Kidney (tissue), 22 donors: ENCODE measurements at regions of chr20 and their contacts with region 1.

Region 1: DNA sequence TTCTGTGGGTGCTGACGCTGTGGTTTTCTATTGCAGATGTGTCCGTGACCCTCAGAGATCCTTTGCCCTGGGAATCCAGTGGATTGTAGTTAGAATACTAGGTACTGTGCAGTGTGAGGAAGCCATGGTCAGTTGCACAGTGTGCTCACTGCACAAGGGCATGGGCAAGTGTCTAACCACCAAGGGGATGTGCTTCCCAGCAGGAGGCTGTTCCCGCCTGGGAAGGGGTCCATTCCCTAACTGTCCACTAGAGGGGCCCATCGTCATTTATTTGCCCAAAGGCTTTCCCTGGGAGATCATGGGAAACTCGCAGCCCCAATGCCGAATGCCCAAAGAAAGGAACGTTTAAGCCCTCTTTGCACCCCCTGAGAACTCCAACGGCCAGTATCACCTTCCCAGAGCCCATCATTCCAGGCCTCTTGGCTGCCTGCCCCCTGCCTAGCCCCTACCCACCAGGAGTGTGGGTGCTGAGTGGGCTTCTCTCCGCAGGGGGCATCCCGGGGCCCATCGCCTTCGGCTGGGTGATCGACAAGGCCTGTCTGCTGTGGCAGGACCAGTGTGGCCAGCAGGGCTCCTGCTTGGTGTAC is 26.2 kb downstream of the SLCO4A1 start:
- DNase-seq: peak in 4 of 5 donors; percentile 88 to 90 (median 89)
- H3K4me3 ChIP-seq: no peak overlapping the region
- H3K27ac ChIP-seq: no peak overlapping the region
- H3K4me1 ChIP-seq: peaks cover 0 to 3% (median 0%) of the 10 kb centered on the region in 3 donors
- H3K27me3 ChIP-seq: no peaks in the 10 kb centered on the region
- CTCF ChIP-seq: peak; percentile 80

Region 2: GRCh38 chr20:62808211-62808865 is 139.8 kb after region 1 on chr20:
- intact Hi-C with region 1: loop called (anchors 10 kb)
- DNase-seq: peak in 3 of 5 donors; percentile 64 to 79 (median 74)
- H3K4me3 ChIP-seq: no peak overlapping the region
- H3K27ac ChIP-seq: no peak overlapping the region
- H3K4me1 ChIP-seq: peaks cover 0 to 16% (median 12%) of the 10 kb centered on the region in 3 donors
- H3K27me3 ChIP-seq: no peaks in the 10 kb centered on the region
- CTCF ChIP-seq: peak; percentile 70